ENCODE measurements at regions of chrX and their contacts with region 1.

Region 1: DNA sequence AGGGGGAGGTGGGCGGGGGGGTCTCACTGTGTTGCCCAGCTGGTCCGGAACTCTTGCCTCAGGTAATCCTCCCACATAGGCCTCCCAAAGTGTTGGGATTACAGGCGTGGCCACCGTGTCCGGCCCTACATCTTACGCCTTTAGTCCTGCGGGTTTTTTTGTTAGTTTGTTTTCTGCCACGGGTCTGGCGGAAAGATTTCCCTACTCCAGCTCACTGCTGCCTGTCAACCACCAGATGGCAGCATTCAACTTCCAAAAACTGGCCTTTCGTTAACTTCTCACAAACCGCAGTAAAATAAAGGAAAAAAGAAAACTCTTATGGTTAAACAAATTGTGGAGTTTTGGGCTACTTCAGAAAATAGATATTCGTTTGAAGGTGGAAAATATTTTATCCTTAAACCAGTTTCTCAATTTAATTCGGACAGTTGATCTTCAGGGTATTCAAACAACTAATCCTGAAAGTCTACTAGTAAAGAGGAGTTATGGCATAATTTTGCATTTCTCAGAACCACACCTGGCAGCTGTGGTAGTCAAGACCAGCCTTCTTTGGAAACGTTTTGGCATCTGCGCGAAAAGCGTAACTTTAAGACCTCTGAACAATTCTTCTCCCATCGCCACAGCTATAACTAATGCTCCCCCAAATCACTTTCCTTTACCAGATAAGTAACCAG is 41.1 kb downstream of the LUZP4 start:
- H3K4me3 ChIP-seq: no peak overlapping the region
- H3K27ac ChIP-seq: no peak overlapping the region
- H3K4me1 ChIP-seq: no peaks in the 10 kb centered on the region
- CTCF ChIP-seq: peak; percentile 70

Region 2: GRCh38 chrX:115054876-115055275 is 275.8 kb before region 1 on chrX:
- CTCF ChIA-PET with region 1: no interaction called
- POLR2A ChIA-PET with region 1: no interaction called
- H3K4me3 ChIP-seq: no peak overlapping the region
- H3K27ac ChIP-seq: no peak overlapping the region
- H3K4me1 ChIP-seq: no peaks in the 10 kb centered on the region
- CTCF ChIP-seq: no peak

Region 3: GRCh38 chrX:115344885-115345614 is 14.4 kb after region 1 on chrX:
- CTCF ChIA-PET with region 1: interaction called, 15 read pairs
- POLR2A ChIA-PET with region 1: no interaction called
- H3K4me3 ChIP-seq: no peak overlapping the region
- H3K27ac ChIP-seq: 0 out of 2 replicates have a peak overlapping the region, but pooled peaks have one; percentile 1
- H3K4me1 ChIP-seq: no peaks in the 10 kb centered on the region
- CTCF ChIP-seq: no peak

Region 4: GRCh38 chrX:115560978-115561604 is 230.5 kb after region 1 on chrX and contains the start of gene PLS3:
- CTCF ChIA-PET with region 1: interaction called, 8 read pairs
- POLR2A ChIA-PET with region 1: interaction called, 15 read pairs
- H3K4me3 ChIP-seq: peak within 1 kb of the TSS; percentile 91
- H3K27ac ChIP-seq: peak within 1 kb of the TSS; percentile 95
- H3K4me1 ChIP-seq: peaks cover 4% of the 10 kb centered on the region; the same call in 1 of the 2 replicates
- CTCF ChIP-seq: peak; percentile 39; the same call in 1 of the 2 replicates

Region 5: DNA sequence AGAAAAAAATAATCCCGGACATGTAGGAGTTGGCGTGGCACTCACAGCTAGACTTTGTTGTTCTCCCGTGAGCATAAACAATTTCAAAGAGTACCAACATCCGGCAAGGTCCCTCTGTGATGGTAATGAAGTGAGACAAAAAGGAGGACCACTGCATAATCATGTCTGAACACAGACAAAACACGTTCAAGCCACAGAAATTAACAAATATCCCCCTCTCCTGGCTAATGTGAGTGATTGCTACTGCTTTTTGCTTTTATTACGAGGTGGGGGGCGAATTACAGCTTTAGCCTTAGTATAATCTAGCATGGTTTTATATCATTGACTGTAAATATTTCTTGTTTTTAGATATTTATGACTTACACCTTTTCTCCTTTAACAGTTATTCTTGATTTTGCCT is 348.8 kb after region 1 on chrX:
- CTCF ChIA-PET with region 1: interaction called, 18 read pairs
- POLR2A ChIA-PET with region 1: interaction called, 4 read pairs
- H3K4me3 ChIP-seq: no peak overlapping the region
- H3K27ac ChIP-seq: no peak overlapping the region
- H3K4me1 ChIP-seq: no peaks in the 10 kb centered on the region
- CTCF ChIP-seq: no peak

Region 6: DNA sequence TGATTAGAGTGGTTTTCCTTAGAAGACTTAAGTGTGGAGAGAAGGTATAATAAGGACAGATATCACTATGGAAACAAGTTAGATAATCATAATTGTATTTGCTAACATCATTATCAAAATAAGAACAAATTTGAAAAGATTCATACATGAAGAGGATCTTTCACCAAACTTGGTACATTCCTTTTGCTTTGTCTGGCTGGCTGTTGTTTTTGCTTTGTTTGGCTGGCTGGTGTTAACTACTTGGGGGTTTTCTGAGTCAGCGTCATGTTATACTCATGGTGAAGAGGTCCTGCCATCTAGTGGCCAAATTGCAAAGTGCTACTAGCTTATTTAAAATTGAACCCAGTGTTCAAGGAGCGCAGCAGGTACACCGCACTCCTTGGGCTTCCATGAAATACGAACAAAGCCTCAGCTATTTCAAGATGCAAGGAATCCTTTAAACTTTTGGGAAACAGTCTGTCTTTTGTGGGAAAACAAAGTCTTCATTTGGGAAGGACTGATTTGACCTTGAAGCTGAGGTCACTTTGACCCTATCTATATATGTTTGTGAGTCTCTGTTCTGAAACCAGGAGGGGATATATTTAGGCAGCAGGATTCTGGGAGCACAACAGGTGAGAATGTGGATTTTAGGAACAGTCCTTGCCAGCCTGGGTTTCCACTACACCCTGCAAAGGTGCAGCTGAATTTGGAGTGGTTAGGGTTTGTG is 360.0 kb after region 1 on chrX:
- CTCF ChIA-PET with region 1: interaction called, 13 read pairs
- POLR2A ChIA-PET with region 1: no interaction called
- H3K4me3 ChIP-seq: no peak overlapping the region
- H3K27ac ChIP-seq: no peak overlapping the region
- H3K4me1 ChIP-seq: no peaks in the 10 kb centered on the region; the same call in 1 of the 2 replicates
- CTCF ChIP-seq: peak; percentile 68